ENCODE measurements at regions of chr20 and their contacts with region 1.

Region 1: DNA sequence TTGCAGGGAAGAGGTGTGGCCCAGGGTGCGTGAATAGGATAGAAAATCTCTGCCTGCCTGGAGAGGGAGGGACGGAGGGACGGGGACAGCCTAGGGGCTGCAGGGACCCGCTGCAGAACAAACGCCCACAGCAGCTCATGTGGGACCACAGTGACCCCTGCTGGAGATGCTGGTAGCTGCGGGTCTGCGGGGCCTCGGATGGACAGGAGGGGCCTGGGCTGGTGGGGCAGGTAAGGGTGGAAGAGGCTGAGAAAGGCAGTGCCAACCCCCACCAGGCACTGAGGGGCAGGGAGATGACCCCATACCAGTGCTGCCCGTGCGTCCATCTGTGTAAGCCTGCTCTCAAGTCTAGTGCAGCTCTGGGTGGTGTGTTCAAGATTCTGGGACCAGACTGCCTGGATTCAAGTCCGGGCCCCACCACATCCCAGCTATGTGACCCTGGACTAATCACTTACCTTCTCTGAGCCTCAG is 39.4 kb downstream of the KIAA1755 start:
- DNase-seq: peak; percentile 73 to 91
- ATAC-seq: peak; percentile 72 to 81
- H3K4me3 ChIP-seq: no peak overlapping the region
- H3K27ac ChIP-seq: peak overlapping the region; percentile 90 to 98
- H3K4me1 ChIP-seq: peaks cover 51% of the 10 kb centered on the region
- CTCF ChIP-seq: peak; percentile 94
- EP300 ChIP-seq: no peak
- POLR2A ChIP-seq: no peak
- RAD21 ChIP-seq: peak; percentile 97 to 99

Region 2: DNA sequence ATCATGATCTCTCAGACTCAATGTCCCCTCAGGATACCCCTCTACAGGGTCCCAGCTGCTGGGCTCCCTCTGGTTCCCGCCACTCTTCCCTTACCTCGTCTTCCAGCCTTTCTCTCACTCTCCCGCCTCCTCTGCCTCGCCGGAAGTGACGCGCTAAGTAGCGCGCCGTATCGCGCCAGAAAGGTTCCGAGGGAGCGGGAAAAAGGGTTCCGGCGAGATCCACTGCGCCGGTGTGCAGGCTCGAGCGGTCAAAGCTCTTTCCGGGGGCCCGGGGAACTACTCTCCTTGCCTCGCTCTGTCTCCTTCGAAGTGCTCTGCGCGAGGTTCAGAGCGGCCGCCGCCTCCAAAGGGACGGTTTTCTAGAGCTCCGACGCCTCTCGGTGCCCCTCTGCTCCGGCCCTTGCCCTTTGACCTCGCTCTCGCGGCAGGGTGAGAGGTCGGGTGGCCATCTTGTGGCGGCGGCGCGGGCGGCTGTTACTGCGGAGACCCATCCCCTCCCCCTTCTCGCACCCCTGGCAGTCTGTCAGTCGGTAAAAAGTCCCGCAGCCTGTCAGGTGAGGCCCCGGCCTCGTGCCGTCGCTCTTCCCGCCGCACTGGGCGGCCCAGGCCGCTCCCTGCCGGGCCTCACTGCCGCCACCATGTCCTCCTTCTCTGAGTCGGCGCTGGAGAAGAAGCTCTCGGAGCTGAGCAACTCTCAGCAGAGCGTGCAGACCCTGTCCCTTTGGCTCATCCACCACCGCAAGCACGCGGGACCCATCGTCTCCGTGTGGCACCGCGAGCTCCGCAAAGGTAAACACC is 187.6 kb before region 1 on chr20 and contains the starts of genes RPRD1B and TTI1:
- CTCF ChIA-PET with region 1: interaction called, 15 read pairs
- POLR2A ChIA-PET with region 1: interaction called, 3 read pairs
- DNase-seq: peak; percentile 80 to 90
- ATAC-seq: peak; percentile 95 to 98
- H3K4me3 ChIP-seq: peak within 1 kb of the TSS; percentile 88
- H3K27ac ChIP-seq: peak within 1 kb of the TSS; percentile 91 to 95
- H3K4me1 ChIP-seq: peaks cover 25% of the 10 kb centered on the region; the same call in 2 of the 3 replicates
- CTCF ChIP-seq: no peak
- EP300 ChIP-seq: no peak
- POLR2A ChIP-seq: peak; percentile 56
- RAD21 ChIP-seq: no peak; a peak in 2 of 5 replicates
- polyA plus RNA-seq, gene RPRD1B: 26.7 and 28.4 TPM in 2 replicates
- polyA plus RNA-seq, gene TTI1: 27.9 and 30.6 TPM in 2 replicates

Region 3: GRCh38 chr20:38084400-38084951 is 136.7 kb before region 1 on chr20:
- CTCF ChIA-PET with region 1: interaction called, 16 read pairs
- POLR2A ChIA-PET with region 1: no interaction called
- DNase-seq: peak in 1 of 2 experiments; percentile 29
- ATAC-seq: peak in 1 of 2 experiments; percentile 43; a peak in 2 of 6 replicates
- H3K4me3 ChIP-seq: no peak overlapping the region
- H3K27ac ChIP-seq: 0 out of 6 replicates have a peak overlapping the region, but pooled peaks of 1 of the 2 experiments have one; percentile 20
- H3K4me1 ChIP-seq: peaks cover 9% of the 10 kb centered on the region; the same call in 2 of the 3 replicates
- CTCF ChIP-seq: no peak
- EP300 ChIP-seq: no peak
- POLR2A ChIP-seq: no peak
- RAD21 ChIP-seq: no peak

Region 4: DNA sequence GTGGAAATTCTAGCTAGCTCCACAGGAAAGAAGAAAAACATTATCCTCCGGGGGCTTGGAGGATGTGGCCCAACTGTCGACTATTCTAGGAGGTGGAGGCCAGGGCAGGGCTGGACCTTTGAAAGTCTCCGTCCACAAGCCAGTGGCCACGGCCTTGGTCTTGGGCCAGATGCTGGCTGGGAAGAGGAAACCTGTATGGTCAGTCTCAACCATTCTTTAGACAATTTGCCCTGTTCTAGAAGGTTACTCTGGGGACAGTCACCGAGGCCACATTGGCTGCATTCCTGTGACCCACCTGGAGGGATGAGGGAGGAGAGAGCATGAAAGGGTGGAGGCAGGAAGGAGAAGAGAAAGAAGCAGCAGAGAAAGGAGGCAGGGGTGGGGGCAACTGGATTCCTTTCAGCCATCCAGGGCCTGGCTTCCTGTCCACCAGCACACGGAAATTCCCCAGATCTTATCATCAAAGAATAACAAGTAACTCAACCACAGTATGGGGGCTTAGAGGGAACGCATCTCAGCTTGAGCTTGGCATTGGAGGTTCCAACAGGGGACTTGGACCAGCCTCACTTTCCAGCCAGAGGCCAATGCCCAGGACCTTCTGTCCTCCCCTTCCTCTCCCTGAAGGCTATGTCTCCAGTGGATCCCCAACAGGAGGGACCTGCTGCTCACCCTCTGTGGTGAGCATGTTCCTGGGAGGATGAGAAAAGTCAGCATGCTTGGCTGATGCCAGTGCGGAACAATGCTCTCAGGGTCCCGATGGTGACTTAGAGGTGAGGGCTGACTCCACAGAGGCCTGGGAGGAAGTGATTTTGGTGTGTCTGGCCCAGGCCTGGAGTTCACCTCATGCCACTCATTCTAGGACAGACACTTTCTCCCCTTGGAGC is 86.5 kb before region 1 on chr20:
- CTCF ChIA-PET with region 1: interaction called, 57 read pairs
- POLR2A ChIA-PET with region 1: interaction called, 4 read pairs
- DNase-seq: no peak
- ATAC-seq: peak in 1 of 2 experiments; percentile 2; a peak in 2 of 6 replicates
- H3K4me3 ChIP-seq: no peak overlapping the region
- H3K27ac ChIP-seq: peak overlapping the region; percentile 56 to 83
- H3K4me1 ChIP-seq: peaks cover 27% of the 10 kb centered on the region
- CTCF ChIP-seq: no peak
- EP300 ChIP-seq: no peak
- POLR2A ChIP-seq: no peak
- RAD21 ChIP-seq: no peak

Region 5: DNA sequence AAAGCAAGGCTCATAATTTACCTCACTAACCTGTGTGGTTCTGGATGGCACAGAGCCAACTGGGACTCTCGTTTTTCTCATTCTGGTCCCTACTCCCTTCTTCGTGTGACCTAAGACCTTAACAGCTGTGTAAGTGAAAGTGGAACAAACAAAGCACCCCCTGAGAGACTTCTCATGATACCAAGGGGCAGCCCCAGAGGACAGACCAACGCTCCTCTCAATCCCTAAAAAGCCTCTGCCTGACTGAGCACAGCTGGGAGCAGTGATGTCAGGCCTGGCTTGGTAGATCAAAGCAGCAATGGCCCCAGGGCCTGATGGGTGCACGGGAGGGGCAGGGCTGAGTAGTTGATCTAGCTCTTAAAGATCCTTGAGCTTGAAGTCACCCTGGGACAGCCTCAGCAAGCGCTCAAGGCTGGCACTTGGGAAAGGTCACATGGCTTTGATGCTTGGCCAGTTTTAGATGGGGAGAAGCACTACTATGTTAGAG is 39.9 kb before region 1 on chr20:
- CTCF ChIA-PET with region 1: interaction called, 818 read pairs
- POLR2A ChIA-PET with region 1: no interaction called
- DNase-seq: no peak
- ATAC-seq: no peak; a peak in 1 of 6 replicates
- H3K4me3 ChIP-seq: no peak overlapping the region
- H3K27ac ChIP-seq: peak overlapping the region in 1 of 2 experiments; percentile 42; a peak in 3 of 6 replicates
- H3K4me1 ChIP-seq: peaks cover 19% of the 10 kb centered on the region; the same call in 2 of the 3 replicates
- CTCF ChIP-seq: no peak
- EP300 ChIP-seq: no peak
- POLR2A ChIP-seq: no peak
- RAD21 ChIP-seq: no peak

Region 6: GRCh38 chr20:38245753-38246152 is 24.6 kb after region 1 on chr20:
- CTCF ChIA-PET with region 1: interaction called, 107 read pairs
- POLR2A ChIA-PET with region 1: no interaction called
- DNase-seq: no peak
- ATAC-seq: no peak
- H3K4me3 ChIP-seq: no peak overlapping the region
- H3K27ac ChIP-seq: no peak overlapping the region
- H3K4me1 ChIP-seq: no peaks in the 10 kb centered on the region
- CTCF ChIP-seq: no peak
- EP300 ChIP-seq: no peak
- POLR2A ChIP-seq: no peak
- RAD21 ChIP-seq: no peak

Region 7: GRCh38 chr20:38320221-38320620 is 99.1 kb after region 1 on chr20:
- CTCF ChIA-PET with region 1: interaction called, 11 read pairs
- POLR2A ChIA-PET with region 1: no interaction called
- DNase-seq: no peak
- ATAC-seq: no peak
- H3K4me3 ChIP-seq: no peak overlapping the region
- H3K27ac ChIP-seq: no peak overlapping the region
- H3K4me1 ChIP-seq: no peaks in the 10 kb centered on the region
- CTCF ChIP-seq: no peak
- EP300 ChIP-seq: no peak
- POLR2A ChIP-seq: no peak
- RAD21 ChIP-seq: no peak

Measured in A549 (cell line).